Naive thymus-derived CD4-positive, alpha-beta T cell (primary cell): ENCODE measurements at regions of chr16 and their contacts with region 1.

Region 1: GRCh38 chr16:89706507-89707263 is 5.2 kb upstream of the SPATA2L start:
- DNase-seq: peak in 1 of 9 donors; percentile 7
- ATAC-seq: no peak
- H3K4me3 ChIP-seq: no peak overlapping the region
- H3K4me3 Mint-ChIP-seq: peak overlapping the region in 1 of 10 donors; percentile 26
- H3K27ac ChIP-seq: no peak overlapping the region
- H3K27ac Mint-ChIP-seq: no peak overlapping the region
- H3K4me1 ChIP-seq: peaks cover 4 to 13% of the 10 kb centered on the region in 2 donors
- H3K4me1 Mint-ChIP-seq: peaks cover 5 to 23% (median 14%) of the 10 kb centered on the region in 7 donors
- H3K27me3 ChIP-seq: no peaks in the 10 kb centered on the region
- H3K27me3 Mint-ChIP-seq: no peaks in the 10 kb centered on the region

Region 2: DNA sequence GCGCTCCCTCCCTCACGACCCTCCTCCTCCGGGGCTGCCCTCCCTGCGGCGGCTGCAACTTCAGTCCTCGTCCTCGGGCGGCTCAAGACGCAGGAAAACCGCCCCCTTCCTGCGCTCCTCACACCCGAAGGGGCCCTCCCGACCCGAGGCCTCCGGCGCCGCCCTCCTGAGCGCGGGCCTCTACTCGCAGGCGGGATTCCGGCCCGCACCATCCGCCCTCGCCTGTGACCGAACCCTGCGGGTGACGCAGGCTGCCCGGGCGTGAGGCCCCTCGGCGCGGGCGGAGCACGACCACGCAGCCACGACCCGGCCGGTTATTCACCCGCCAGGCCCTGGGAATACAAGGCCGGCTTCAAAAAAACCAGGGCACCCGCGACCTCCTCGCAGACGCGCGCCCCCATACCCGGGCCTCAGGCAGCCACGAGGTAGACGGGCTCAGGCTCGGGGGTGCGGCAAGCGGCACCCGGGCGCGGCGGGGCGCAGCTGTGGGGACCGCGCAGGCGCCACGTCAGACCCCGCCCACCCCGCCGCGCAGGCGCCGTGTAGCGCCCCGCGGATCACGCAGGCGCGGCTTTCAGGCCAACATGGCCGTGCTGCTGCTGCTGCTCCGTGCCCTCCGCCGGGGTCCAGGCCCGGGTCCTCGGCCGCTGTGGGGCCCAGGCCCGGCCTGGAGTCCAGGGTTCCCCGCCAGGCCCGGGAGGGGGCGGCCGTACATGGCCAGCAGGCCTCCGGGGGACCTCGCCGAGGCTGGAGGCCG is 198.7 kb before region 1 on chr16 and contains the start of gene SPG7:
- CTCF ChIA-PET with region 1: no interaction called
- POLR2A ChIA-PET with region 1: no interaction called
- intact Hi-C with region 1: no loop called
- DNase-seq: peak; percentile 82 to 98 (median 95)
- ATAC-seq: peak; percentile 83
- H3K4me3 ChIP-seq: peak within 1 kb of the TSS; percentile 64
- H3K4me3 Mint-ChIP-seq: peak within 1 kb of the TSS; percentile 82 to 96 (median 95)
- H3K27ac ChIP-seq: peak within 1 kb of the TSS; percentile 86
- H3K27ac Mint-ChIP-seq: peak within 1 kb of the TSS; percentile 87 to 97 (median 94)
- H3K4me1 ChIP-seq: peaks cover 30 to 33% of the 10 kb centered on the region in 2 donors
- H3K4me1 Mint-ChIP-seq: peaks cover 14 to 46% (median 31%) of the 10 kb centered on the region in 7 donors
- H3K27me3 ChIP-seq: no peaks in the 10 kb centered on the region
- H3K27me3 Mint-ChIP-seq: no peaks in the 10 kb centered on the region
- total RNA-seq, gene SPG7: 129 to 181 (median 170) TPM

Region 3: DNA sequence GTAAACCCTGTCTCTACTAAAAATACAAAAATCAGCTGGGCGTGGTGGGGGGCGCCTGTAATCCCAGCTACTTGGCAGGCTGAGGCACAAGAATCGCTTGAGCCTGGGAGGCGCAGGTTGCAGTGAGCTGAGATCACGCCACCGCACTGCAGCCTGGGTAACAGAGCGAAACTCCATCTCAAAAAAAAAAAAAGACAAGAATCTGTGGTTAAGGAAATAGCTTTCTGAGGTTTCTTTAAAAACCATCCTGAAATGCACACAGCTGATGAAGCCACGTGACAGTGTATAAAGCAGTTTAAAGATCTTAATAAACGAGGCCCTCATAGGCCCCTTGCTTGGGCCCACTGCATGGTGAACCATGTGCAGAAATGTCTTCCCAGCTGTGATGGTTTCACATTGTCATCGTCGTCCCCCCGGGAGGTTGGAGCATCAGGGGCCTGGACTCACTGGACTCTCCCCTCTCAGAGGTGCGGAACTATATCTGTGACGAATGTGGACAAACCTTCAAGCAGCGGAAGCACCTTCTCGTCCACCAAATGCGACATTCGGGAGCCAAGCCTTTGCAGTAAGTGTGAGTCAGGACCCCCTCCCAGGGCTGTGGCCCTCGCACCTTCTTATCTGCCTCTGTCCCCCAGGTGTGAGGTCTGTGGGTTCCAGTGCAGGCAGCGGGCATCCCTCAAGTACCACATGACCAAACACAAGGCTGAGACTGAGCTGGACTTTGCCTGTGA is 30.8 kb after region 1 on chr16:
- CTCF ChIA-PET with region 1: interaction called, 7 read pairs
- POLR2A ChIA-PET with region 1: interaction called, 5 read pairs
- intact Hi-C with region 1: loop called (anchors 1 kb)
- DNase-seq: peak in 7 of 9 donors; percentile 63 to 83 (median 76)
- ATAC-seq: peak; percentile 86
- H3K4me3 ChIP-seq: no peak overlapping the region
- H3K4me3 Mint-ChIP-seq: peak overlapping the region; percentile 39 to 80 (median 66)
- H3K27ac ChIP-seq: peak overlapping the region; percentile 46
- H3K27ac Mint-ChIP-seq: peak overlapping the region; percentile 68 to 94 (median 86)
- H3K4me1 ChIP-seq: peaks cover 28 to 40% of the 10 kb centered on the region in 2 donors
- H3K4me1 Mint-ChIP-seq: peaks cover 4 to 70% (median 37%) of the 10 kb centered on the region in 7 donors
- H3K27me3 ChIP-seq: no peaks in the 10 kb centered on the region
- H3K27me3 Mint-ChIP-seq: no peaks in the 10 kb centered on the region

Region 4: GRCh38 chr16:89795676-89796075 is 89.0 kb after region 1 on chr16:
- CTCF ChIA-PET with region 1: interaction called, 138 read pairs
- POLR2A ChIA-PET with region 1: interaction called, 21 read pairs
- intact Hi-C with region 1: loop called in 1 of 2 experiments (anchors 1 kb)
- DNase-seq: no peak
- ATAC-seq: no peak
- H3K4me3 ChIP-seq: no peak overlapping the region
- H3K4me3 Mint-ChIP-seq: no peak overlapping the region
- H3K27ac ChIP-seq: no peak overlapping the region
- H3K27ac Mint-ChIP-seq: no peak overlapping the region
- H3K4me1 ChIP-seq: no peaks in the 10 kb centered on the region
- H3K4me1 Mint-ChIP-seq: peaks cover 3 to 12% (median 10%) of the 10 kb centered on the region in 7 donors
- H3K27me3 ChIP-seq: no peaks in the 10 kb centered on the region
- H3K27me3 Mint-ChIP-seq: no peaks in the 10 kb centered on the region

Region 5: GRCh38 chr16:89860747-89861304 is 154.1 kb after region 1 on chr16:
- CTCF ChIA-PET with region 1: interaction called, 65 read pairs
- POLR2A ChIA-PET with region 1: interaction called, 3 read pairs
- intact Hi-C with region 1: loop called (anchors 1 kb)
- DNase-seq: peak; percentile 61 to 85 (median 70)
- ATAC-seq: peak; percentile 91
- H3K4me3 ChIP-seq: no peak overlapping the region
- H3K4me3 Mint-ChIP-seq: peak overlapping the region in 5 of 10 donors; percentile 1 to 41 (median 26)
- H3K27ac ChIP-seq: no peak overlapping the region
- H3K27ac Mint-ChIP-seq: peak overlapping the region in 8 of 9 donors; percentile 39 to 83 (median 70)
- H3K4me1 ChIP-seq: peaks cover 27 to 32% of the 10 kb centered on the region in 2 donors
- H3K4me1 Mint-ChIP-seq: peaks cover 32 to 42% (median 34%) of the 10 kb centered on the region in 7 donors
- H3K27me3 ChIP-seq: no peaks in the 10 kb centered on the region
- H3K27me3 Mint-ChIP-seq: no peaks in the 10 kb centered on the region

Region 6: GRCh38 chr16:89893642-89894509 is 187.2 kb after region 1 on chr16:
- CTCF ChIA-PET with region 1: no interaction called
- POLR2A ChIA-PET with region 1: no interaction called
- intact Hi-C with region 1: no loop called
- DNase-seq: no peak
- ATAC-seq: peak; percentile 22
- H3K4me3 ChIP-seq: no peak overlapping the region
- H3K4me3 Mint-ChIP-seq: no peak overlapping the region
- H3K27ac ChIP-seq: no peak overlapping the region
- H3K27ac Mint-ChIP-seq: peak overlapping the region in 1 of 9 donors; percentile 57
- H3K4me1 ChIP-seq: peaks cover 0 to 5% of the 10 kb centered on the region in 2 donors
- H3K4me1 Mint-ChIP-seq: peaks cover 0 to 8% (median 5%) of the 10 kb centered on the region in 7 donors
- H3K27me3 ChIP-seq: no peaks in the 10 kb centered on the region
- H3K27me3 Mint-ChIP-seq: no peaks in the 10 kb centered on the region

Region 7: GRCh38 chr16:89909777-89910716 is 203.4 kb after region 1 on chr16:
- CTCF ChIA-PET with region 1: interaction called, 6 read pairs
- POLR2A ChIA-PET with region 1: interaction called, 3 read pairs
- intact Hi-C with region 1: loop called (anchors 1 kb)
- DNase-seq: peak; percentile 50 to 73 (median 66)
- ATAC-seq: peak; percentile 93
- H3K4me3 ChIP-seq: no peak overlapping the region
- H3K4me3 Mint-ChIP-seq: peak overlapping the region in 1 of 10 donors; percentile 2
- H3K27ac ChIP-seq: no peak overlapping the region
- H3K27ac Mint-ChIP-seq: peak overlapping the region in 4 of 9 donors; percentile 11 to 67 (median 44)
- H3K4me1 ChIP-seq: peaks cover 3 to 4% of the 10 kb centered on the region in 2 donors
- H3K4me1 Mint-ChIP-seq: peaks cover 5 to 15% (median 8%) of the 10 kb centered on the region in 7 donors
- H3K27me3 ChIP-seq: no peaks in the 10 kb centered on the region
- H3K27me3 Mint-ChIP-seq: no peaks in the 10 kb centered on the region

Region 8: DNA sequence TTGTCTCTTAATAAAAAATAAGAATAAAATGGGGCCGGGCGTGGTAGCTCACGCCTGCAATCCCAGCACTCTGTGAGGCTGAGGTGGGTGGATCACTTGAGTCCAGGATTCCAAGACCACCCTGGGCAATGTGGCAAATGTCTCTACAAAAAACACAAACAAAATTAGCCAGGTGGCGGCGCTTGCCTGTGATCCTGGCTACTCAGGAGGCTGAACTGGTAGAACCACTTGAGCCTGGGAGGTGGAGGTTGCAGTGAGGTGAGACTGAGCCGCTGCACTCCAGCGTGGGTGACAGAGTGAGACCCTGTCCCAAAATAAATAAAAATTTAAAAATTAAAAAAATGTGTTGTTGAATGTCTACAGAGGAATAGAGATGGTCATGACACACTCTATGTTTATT is 239.0 kb after region 1 on chr16:
- CTCF ChIA-PET with region 1: no interaction called
- POLR2A ChIA-PET with region 1: no interaction called
- intact Hi-C with region 1: no loop called
- DNase-seq: no peak
- ATAC-seq: no peak
- H3K4me3 ChIP-seq: no peak overlapping the region
- H3K4me3 Mint-ChIP-seq: no peak overlapping the region
- H3K27ac ChIP-seq: no peak overlapping the region
- H3K27ac Mint-ChIP-seq: no peak overlapping the region
- H3K4me1 ChIP-seq: peaks cover 10 to 11% of the 10 kb centered on the region in 2 donors
- H3K4me1 Mint-ChIP-seq: peaks cover 7 to 17% (median 9%) of the 10 kb centered on the region in 7 donors
- H3K27me3 ChIP-seq: no peaks in the 10 kb centered on the region
- H3K27me3 Mint-ChIP-seq: peaks cover 15 to 53% (median 17%) of the 10 kb centered on the region in 5 donors